IMR-90 (cell line): ENCODE measurements at regions of chr5 and their contacts with region 1.

Region 1: GRCh38 chr5:60295423-60295822 is 401.9 kb upstream of the PDE4D start:
- DNase-seq: peak; percentile 5
- ATAC-seq: peak; percentile 53; the same call in 1 of the 2 replicates
- H3K4me3 ChIP-seq: no peak overlapping the region
- H3K27ac ChIP-seq: no peak overlapping the region
- H3K4me1 ChIP-seq: no peaks in the 10 kb centered on the region
- H3K27me3 ChIP-seq: no peaks in the 10 kb centered on the region
- CTCF ChIP-seq: peak; percentile 42
- POLR2A ChIP-seq: no peak
- RAD21 ChIP-seq: peak; percentile 55

Region 2: GRCh38 chr5:60196382-60197113 is 98.9 kb before region 1 on chr5:
- CTCF ChIA-PET with region 1: no interaction called
- POLR2A ChIA-PET with region 1: no interaction called
- dilution Hi-C with region 1: no loop called
- in situ Hi-C with region 1: no loop called
- intact Hi-C with region 1: no loop called
- DNase-seq: peak; percentile 72
- ATAC-seq: no peak
- H3K4me3 ChIP-seq: no peak overlapping the region
- H3K27ac ChIP-seq: no peak overlapping the region
- H3K4me1 ChIP-seq: no peaks in the 10 kb centered on the region
- H3K27me3 ChIP-seq: no peaks in the 10 kb centered on the region
- CTCF ChIP-seq: no peak
- POLR2A ChIP-seq: no peak
- RAD21 ChIP-seq: no peak

Region 3: GRCh38 chr5:60586307-60586901 is 291.0 kb after region 1 on chr5:
- CTCF ChIA-PET with region 1: no interaction called
- POLR2A ChIA-PET with region 1: no interaction called
- dilution Hi-C with region 1: no loop called
- in situ Hi-C with region 1: no loop called
- intact Hi-C with region 1: loop called (anchors 2 kb)
- DNase-seq: peak; percentile 50
- ATAC-seq: peak; percentile 53; the same call in 1 of the 2 replicates
- H3K4me3 ChIP-seq: no peak overlapping the region
- H3K27ac ChIP-seq: no peak overlapping the region
- H3K4me1 ChIP-seq: no peaks in the 10 kb centered on the region
- H3K27me3 ChIP-seq: no peaks in the 10 kb centered on the region
- CTCF ChIP-seq: peak; percentile 51
- POLR2A ChIP-seq: no peak
- RAD21 ChIP-seq: peak; percentile 50

Region 4: DNA sequence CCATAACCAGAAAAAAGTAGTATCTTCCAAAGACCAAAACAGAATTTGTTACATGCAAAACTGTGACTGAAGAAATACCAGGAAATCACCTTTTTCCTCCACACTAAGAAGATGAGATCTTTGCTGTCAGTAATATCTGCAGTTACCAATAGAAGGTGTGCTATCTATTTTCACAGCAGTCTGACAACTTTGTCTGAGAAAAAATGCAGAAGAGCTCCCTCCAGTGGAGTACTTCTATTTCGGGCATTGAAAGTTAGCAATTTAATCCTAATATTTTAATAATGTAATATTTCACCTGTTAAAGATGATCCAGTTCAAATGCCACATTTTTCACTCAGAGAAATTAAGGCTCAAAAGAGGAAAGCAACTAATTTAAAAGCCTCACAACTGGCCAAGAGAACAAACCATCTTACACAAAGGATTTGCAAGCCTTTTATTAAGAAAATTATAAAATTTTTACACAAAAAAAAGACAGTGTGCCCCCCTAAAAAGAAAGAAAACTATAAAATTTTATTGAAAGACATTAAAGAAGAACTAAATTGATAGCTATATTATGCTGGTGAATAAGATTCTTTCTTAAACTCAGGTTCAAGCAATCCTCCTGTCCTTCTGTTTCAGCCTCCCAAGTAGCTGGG is 354.0 kb after region 1 on chr5:
- CTCF ChIA-PET with region 1: no interaction called
- POLR2A ChIA-PET with region 1: no interaction called
- dilution Hi-C with region 1: no loop called
- in situ Hi-C with region 1: no loop called
- intact Hi-C with region 1: loop called (anchors 10 kb)
- DNase-seq: peak; percentile 51
- ATAC-seq: peak; percentile 34
- H3K4me3 ChIP-seq: no peak overlapping the region
- H3K27ac ChIP-seq: no peak overlapping the region
- H3K4me1 ChIP-seq: no peaks in the 10 kb centered on the region
- H3K27me3 ChIP-seq: no peaks in the 10 kb centered on the region
- CTCF ChIP-seq: peak; percentile 69
- POLR2A ChIP-seq: no peak
- RAD21 ChIP-seq: peak; percentile 52

Region 5: GRCh38 chr5:60668686-60669304 is 373.4 kb after region 1 on chr5:
- CTCF ChIA-PET with region 1: no interaction called
- POLR2A ChIA-PET with region 1: no interaction called
- dilution Hi-C with region 1: no loop called
- in situ Hi-C with region 1: no loop called
- intact Hi-C with region 1: loop called (anchors 5 kb)
- DNase-seq: peak; percentile 41
- ATAC-seq: no peak
- H3K4me3 ChIP-seq: no peak overlapping the region
- H3K27ac ChIP-seq: no peak overlapping the region
- H3K4me1 ChIP-seq: no peaks in the 10 kb centered on the region
- H3K27me3 ChIP-seq: no peaks in the 10 kb centered on the region
- CTCF ChIP-seq: peak; percentile 60
- POLR2A ChIP-seq: no peak
- RAD21 ChIP-seq: peak; percentile 41